SK-N-SH (cell line): ENCODE measurements at regions of chr2 and their contacts with region 1.

Region 1: DNA sequence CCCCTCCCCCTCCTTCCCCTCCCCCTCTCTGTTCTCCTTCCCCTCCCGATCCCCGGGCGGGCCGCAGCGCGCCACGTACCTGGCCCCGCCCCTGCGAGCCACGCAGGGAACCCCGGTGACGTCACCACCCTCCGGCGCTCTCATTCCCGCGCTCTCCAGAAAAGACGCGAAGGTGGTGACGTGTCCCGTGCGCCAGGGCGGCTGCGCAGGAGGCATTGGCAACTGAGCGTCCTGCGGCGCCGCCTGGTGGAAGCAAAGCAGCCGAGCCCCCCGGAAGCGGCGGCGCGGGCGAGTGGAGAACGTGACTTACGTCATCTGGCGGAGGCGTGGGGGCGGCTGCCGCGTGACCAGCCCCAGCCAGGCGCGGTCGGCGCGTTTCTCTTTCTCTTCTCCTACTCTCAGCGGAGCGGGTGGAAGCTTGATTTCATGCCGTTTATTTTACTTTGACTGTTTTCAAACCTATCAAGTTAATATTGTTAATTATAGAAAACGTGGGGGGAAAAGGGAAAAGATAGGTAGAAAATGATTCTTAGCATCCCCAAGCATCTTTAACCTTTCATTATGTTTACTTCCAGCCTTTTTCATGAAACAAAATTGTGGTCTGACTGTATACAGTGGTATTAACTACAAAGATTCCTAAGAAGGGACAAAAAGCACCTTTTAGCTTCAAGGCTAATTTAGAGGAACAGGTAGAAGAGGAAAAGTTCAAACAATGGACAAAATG is 48.1 kb downstream of the C2orf42 start:
- DNase-seq: peak; percentile 99
- H3K4me3 ChIP-seq: peak overlapping the region; percentile 56 to 67
- H3K27ac ChIP-seq: peak overlapping the region; percentile 92 to 96
- H3K4me1 ChIP-seq: peaks cover 13 to 20% of the 10 kb centered on the region in 2 experiments; a peak in 3 of 4 replicates
- H3K27me3 ChIP-seq: no peaks in the 10 kb centered on the region
- CTCF ChIP-seq: peak; percentile 84
- EP300 ChIP-seq: peak in 1 of 2 experiments; percentile 91; a peak in 2 of 4 replicates
- RAD21 ChIP-seq: peak; percentile 86

Region 2: DNA sequence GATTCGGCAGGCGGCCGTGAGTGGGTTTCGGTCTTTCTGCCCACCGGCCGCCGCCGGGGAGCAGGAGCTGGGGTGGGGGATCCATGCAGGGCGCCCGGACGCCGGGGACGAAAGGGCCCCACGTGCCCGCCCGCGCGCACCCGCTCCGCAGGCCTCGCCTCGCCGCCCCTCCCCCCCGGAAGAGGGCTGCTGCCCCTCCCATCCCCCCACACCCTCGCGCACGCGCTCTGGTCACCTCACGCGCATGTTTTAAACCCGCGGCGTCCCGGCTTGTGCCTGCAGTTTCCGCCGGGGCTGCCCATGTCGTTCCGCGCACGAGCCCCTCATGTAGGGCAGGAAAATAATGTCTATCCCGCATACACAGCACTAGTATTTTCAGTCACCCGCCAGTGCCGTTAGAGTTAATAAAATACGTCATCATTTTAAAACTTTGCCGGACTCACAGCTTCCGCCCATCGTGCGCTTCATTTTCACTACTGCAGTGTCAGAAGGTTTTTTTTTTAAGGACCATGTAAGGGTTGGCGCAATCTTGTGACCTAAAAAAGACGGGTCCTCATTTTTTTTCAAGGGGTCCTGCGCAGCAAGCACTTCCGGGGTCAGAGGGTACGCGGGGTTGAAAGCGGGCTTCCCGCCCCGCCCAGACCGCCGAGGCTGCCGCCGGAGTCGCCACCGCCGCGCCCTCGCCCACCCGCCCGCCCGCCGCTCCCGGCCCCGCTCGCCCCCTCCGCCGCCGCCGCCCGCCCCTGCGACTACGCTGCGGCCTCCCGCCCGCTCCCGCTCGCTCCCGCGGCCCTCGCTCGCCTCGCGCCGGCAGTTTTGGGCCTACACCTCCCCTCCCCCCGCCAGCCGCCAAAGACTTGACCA is 55.7 kb before region 1 on chr2 and contains the start of gene PCBP1:
- CTCF ChIA-PET with region 1: interaction called, 12 read pairs
- POLR2A ChIA-PET with region 1: interaction called, 32 read pairs
- DNase-seq: peak; percentile 99
- H3K4me3 ChIP-seq: peak within 1 kb of the TSS; percentile 85 to 97
- H3K27ac ChIP-seq: peak within 1 kb of the TSS; percentile 100
- H3K4me1 ChIP-seq: peaks cover 21 to 29% of the 10 kb centered on the region in 2 experiments; a peak in 3 of 4 replicates
- H3K27me3 ChIP-seq: no peaks in the 10 kb centered on the region
- CTCF ChIP-seq: no peak
- EP300 ChIP-seq: no peak
- RAD21 ChIP-seq: no peak
- polyA plus RNA-seq, gene PCBP1: 60.7 and 94.0 TPM in 2 replicates